Pancreas (tissue), 10 donors: ENCODE measurements at regions of chr10 and their contacts with region 1.

Region 1: DNA sequence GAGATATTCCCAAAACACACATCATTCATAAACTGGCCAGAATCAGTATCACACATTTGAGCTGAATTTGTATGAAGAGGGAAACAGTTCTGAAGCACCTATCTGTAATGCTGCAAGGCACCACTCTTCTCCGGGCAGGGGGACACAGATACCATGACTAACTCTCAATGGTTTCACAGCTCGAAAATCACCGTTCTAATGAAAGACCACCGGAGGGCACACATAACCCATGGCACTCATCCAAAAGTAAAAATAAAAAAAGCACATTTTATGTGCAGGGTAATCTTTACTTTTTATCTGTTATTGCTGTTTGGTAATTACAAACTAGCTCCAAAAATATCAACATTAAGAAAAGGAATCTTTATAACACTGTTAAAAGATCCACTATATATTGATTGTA is 137.5 kb downstream of the PARD3 start:
- DNase-seq: no peak
- ATAC-seq: no peak
- H3K4me3 ChIP-seq: no peak overlapping the region
- H3K27ac ChIP-seq: no peak overlapping the region
- H3K4me1 ChIP-seq: peaks cover 8 to 12% (median 8%) of the 10 kb centered on the region in 3 donors
- H3K27me3 ChIP-seq: no peaks in the 10 kb centered on the region
- CTCF ChIP-seq: no peak

Region 2: DNA sequence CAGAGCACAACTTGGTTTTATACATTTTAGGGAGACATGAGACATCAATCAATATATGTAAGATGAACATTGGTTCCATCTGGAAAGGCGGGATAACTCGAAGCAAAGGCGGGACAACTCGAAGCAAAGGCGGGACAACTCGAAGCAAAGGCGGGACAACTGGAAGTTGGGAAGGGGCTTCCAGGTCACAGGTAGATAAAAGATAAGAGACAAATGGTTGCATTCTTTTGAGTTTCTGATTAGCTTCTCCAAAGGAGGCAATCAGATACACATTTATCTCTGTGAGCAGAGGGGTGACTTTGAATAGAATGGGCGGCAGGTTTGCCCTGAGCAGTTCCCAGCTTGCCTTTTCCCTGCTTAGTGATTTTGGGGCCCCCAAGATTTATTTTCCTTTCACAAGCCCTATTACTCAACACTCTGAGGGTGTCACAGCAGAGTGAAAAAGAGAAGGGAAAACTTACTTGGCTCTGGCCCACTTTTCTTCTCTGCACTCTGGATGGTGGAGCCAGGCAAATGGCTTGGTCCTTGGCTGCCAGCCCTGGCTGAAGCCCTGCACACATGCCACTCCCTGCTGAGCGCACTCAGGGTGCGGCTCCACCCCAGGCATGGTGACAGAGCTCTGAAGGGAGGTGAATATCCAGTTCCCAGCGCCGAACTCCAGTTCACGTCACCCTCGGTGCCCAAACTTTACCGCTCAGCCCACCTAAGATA is 90.8 kb after region 1 on chr10:
- intact Hi-C with region 1: loop called in 1 of 3 experiments (anchors 10 kb)
- DNase-seq: peak; percentile 79 to 92 (median 84)
- ATAC-seq: peak; percentile 93 to 96 (median 94)
- H3K4me3 ChIP-seq: peak overlapping the region in 1 of 4 donors; percentile 18
- H3K27ac ChIP-seq: peak overlapping the region in 2 of 4 donors; percentile 11 to 52
- H3K4me1 ChIP-seq: peaks cover 22 to 31% (median 28%) of the 10 kb centered on the region in 3 donors
- H3K27me3 ChIP-seq: no peaks in the 10 kb centered on the region
- CTCF ChIP-seq: no peak

Region 3: GRCh38 chr10:34906067-34906965 is 228.7 kb after region 1 on chr10:
- intact Hi-C with region 1: no loop called
- DNase-seq: no peak
- ATAC-seq: peak in 3 of 4 donors; percentile 44 to 47 (median 46)
- H3K4me3 ChIP-seq: no peak overlapping the region
- H3K27ac ChIP-seq: no peak overlapping the region
- H3K4me1 ChIP-seq: no peaks in the 10 kb centered on the region
- H3K27me3 ChIP-seq: no peaks in the 10 kb centered on the region
- CTCF ChIP-seq: no peak